Cardiac septum (tissue), 1 donor: ENCODE measurements at regions of chr1 and their contacts with region 1.

Region 1: DNA sequence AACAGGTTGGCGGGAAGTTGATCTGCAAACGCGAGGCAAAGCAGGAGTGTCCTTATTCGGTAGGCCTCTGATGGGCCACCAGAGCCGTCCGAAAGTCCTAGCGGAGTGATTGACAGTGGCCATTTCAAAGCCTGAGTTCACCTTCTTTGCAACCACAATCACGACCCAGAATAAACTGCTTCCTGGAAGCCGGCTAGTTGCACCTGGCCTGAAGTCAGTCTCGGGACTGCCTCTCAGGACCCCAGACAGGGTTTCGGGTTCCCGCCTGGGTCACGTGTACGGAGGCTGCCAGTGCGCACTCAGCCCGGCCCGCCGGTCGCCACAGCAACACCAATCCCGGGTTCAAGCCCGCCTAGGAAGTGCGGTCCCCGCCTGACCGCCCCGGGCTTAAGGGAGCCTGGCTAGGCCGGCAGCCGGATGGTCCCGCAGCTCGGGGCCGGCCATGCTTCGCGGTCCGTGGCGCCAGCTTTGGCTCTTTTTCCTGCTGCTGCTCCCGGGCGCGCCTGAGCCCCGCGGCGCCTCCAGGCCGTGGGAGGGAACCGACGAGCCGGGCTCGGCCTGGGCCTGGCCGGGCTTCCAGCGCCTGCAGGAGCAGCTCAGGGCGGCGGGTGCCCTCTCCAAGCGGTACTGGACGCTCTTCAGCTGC is at the start of gene TOR3A:
- DNase-seq: peak; percentile 96
- total RNA-seq, gene TOR3A: 8.7 TPM

Region 2: DNA sequence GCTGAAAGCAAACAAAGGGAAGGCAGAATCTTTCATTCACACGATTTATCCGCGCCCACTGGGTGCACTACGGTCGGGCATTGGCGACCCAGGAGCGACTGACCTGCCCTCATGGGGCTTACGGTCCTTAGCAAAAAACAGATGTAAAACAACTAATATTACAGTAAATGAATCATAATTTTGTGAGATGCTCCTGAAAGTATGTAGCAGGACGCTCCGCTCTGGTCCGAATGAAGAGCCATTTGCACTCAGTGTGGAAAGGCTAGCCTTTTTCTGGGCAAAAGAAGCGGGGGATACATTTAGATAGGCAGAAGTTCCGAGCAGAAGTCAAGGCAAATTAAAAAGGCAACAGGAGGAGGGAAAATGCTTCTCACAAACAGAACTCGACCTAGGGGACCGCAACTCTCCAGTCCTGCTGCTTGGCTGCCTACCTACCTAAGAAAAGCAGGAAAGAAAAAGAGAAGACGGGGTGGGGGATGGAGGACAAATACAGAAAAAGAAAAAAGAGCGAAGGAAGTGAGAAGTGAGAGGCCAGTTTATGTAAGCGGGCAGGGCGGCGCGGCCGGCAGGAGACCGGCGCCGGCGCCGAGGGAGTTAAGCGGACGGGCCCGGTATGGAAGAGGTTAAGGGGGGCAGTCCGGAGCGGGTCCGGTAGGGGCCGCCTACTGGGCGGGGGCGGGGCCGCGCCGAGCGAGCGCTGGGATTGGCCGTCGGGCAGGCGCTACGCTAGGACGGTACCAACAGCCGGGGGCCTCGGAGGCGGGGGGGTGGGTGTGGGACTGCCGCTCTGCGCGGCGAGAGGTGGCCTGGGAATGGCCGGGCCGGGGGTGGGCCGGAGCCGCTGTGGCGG is 56.5 kb before region 1 on chr1 and contains the start of gene FAM20B:
- intact Hi-C with region 1: loop called (anchors 5 kb)
- DNase-seq: peak; percentile 97
- total RNA-seq, gene FAM20B: 54.6 TPM

Region 3: DNA sequence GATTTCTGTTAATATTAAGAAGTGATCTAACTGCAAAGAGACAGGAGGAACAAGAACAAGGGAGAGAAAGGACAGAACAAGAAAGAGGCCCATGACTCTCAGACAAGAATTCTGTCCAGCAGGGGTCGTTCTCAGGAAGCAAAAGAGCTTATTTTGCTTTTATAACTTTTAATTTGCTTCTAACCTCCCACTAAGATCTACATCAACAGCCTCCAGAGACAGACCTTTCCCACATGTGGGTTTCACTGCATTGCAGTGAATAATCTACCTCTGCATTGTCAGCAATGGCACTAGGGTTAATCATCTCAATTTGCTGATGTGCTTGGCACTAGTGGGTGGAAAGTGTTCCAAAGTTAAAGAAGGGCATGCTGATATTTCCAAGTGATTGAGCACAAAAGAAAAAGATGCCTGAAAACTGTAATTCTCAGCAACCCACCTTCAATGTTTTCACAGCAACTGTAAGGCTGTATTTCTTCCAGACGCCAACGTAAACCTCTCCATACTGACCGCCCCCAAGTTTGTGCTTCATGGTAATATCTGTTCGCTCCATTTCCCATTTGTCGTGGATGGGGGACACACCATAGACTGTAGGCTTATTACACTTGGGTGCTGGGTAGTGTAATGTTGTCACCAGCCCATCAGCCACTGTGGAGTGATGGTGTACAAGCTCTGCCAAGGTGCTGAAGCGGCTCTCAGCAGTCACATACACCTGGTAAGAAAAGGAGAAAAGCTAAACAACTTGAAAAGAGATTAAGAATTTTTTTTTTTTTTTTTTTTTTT is 39.5 kb after region 1 on chr1:
- intact Hi-C with region 1: loop called (anchors 2 kb)
- DNase-seq: no peak

Region 4: GRCh38 chr1:179190861-179191260 is 109.1 kb after region 1 on chr1:
- intact Hi-C with region 1: loop called (anchors 2 kb)
- DNase-seq: no peak

Region 5: GRCh38 chr1:179228783-179229213 is 147.0 kb after region 1 on chr1:
- intact Hi-C with region 1: loop called (anchors 1 kb)
- DNase-seq: peak; percentile 86

Region 6: GRCh38 chr1:179293340-179294327 is 211.8 kb after region 1 on chr1 and contains the start of gene SOAT1:
- intact Hi-C with region 1: loop called (anchors 2 kb)
- DNase-seq: peak; percentile 96
- total RNA-seq, gene SOAT1: 9.8 TPM

Region 7: DNA sequence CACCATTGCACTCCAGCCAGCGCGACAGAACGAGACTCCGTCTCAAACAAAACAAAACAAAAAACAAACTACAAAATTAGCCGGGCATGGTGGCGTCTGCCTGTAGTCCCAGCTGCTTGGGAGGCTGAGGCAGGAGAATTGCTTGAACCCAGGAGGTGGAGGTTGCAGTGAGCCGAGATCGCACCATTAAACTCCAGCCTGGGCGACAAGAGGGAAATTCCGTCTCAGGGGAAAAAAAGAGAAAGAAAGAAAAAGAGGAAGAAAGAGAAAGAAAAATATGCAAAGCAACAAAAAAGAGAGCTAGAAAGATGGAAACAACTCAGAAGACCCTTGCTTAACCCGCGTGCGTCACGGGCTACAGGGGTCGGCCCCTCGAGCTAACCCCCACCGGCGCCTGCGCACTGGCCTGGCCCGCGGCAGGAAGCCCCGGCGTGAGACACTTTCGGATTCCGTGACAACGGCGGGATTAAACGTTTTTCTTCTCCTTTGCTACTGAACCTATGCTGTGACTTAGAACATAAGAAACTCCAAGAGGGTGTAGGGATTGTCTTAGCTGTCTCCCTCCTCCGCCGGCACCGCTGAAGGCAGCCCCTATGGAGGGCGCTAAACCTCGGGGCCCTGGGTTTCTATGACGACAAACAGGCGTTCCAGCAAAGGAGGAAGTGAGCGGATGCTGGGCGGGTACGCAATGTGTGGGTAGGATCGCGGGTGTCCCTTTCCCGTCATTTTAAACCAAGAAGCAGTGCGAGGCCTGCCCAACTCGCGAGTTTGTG is 283.7 kb after region 1 on chr1 and contains the start of gene AXDND1:
- intact Hi-C with region 1: loop called (anchors 2 kb)
- DNase-seq: peak; percentile 96
- total RNA-seq, gene AXDND1: not detected